ENCODE measurements at regions of chr9 and their contacts with region 1.

Region 1: DNA sequence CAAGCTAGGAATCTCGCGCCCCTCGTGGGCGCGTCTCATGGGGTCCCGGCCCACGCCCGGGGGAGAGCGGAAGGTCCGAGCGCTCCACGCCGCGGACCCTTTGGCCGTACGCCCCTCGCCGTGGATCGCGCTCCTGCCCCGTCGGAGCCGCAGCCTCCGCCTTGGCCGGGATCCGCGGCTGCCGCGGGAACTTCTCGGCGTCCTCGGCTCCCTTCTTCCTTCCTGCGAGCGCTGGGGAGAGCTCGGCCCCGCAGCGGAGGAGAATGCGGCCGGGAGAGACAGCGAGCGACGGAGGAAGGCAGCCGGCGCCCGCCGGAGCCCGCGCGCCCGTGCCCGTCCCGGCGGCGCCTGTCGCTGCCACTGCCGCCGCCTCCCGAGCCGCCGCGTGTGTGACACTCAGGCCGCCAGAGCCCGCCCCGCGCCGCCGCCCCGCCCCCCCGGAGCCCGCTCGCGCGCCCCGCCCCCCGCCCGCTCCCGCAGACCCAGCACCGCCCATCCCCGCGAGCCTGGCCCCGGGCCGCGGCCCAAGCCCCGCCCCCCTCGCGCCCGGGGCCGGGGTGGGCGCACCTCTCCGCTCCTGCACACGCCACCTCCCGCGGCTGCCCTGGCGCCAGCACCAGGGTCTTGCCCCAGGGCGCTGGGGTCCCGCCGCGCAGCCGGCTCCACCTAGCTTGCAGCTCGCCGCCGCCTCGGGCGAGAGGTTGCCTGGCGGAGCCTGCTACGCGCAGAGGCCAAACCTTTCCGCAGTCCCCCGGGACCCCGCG is at the start of gene SHB:
- DNase-seq: peak; percentile 71
- ATAC-seq: peak; percentile 84
- H3K4me3 Mint-ChIP-seq: peak within 1 kb of the TSS; percentile 82
- H3K27ac Mint-ChIP-seq: no peak within 1 kb of the TSS
- H3K4me1 Mint-ChIP-seq: peaks cover 14% of the 10 kb centered on the region
- H3K27me3 Mint-ChIP-seq: peaks cover 25% of the 10 kb centered on the region
- CTCF ChIP-seq: no peak
- total RNA-seq, gene SHB: 0.44 and 0.81 TPM in 2 replicates

Region 2: GRCh38 chr9:37582548-37583157 is 486.4 kb before region 1 on chr9:
- CTCF ChIA-PET with region 1: no interaction called
- POLR2A ChIA-PET with region 1: no interaction called
- intact Hi-C with region 1: loop called (anchors 5 kb)
- DNase-seq: no peak
- ATAC-seq: peak; percentile 69
- H3K4me3 Mint-ChIP-seq: no peak overlapping the region
- H3K27ac Mint-ChIP-seq: peak overlapping the region; percentile 47
- H3K4me1 Mint-ChIP-seq: peaks cover 21% of the 10 kb centered on the region
- H3K27me3 Mint-ChIP-seq: no peaks in the 10 kb centered on the region
- CTCF ChIP-seq: no peak

Region 3: DNA sequence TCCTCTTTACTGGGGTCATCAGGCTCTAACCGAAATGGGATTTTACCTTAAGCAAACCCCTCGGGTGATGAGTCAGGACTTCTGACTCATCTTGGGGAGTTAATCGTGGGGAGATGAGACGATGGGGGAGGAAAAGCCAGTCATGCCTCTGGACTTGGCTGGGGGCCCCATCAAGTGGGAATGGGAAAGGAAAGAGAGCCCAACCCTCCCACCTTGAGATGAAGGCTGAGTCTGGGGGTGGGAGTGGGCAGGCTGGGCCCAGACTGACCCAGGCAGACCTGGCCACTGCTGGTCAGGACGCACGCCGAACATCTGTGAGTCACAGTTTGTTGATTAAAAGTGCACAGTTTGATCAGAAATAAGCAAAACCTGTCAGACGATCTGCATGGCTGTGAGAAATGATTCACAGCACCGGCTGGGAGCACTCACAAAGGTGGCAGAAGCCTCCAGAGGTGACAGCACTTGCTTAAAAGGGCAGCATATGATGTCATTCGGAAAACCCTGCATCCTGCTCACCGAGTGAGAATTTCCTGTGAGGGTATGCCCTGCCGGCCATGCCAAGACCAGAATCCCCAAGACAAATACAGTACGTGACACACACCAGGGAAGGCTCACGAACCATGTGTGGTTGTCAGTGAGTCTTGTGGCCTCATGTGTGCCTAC is 115.1 kb before region 1 on chr9:
- CTCF ChIA-PET with region 1: no interaction called
- POLR2A ChIA-PET with region 1: no interaction called
- intact Hi-C with region 1: loop called (anchors 1 kb)
- DNase-seq: no peak
- ATAC-seq: peak; percentile 76
- H3K4me3 Mint-ChIP-seq: peak overlapping the region; percentile 22
- H3K27ac Mint-ChIP-seq: peak overlapping the region; percentile 72
- H3K4me1 Mint-ChIP-seq: peaks cover 21% of the 10 kb centered on the region
- H3K27me3 Mint-ChIP-seq: no peaks in the 10 kb centered on the region
- CTCF ChIP-seq: no peak

Region 4: GRCh38 chr9:38047301-38048251 is 21.5 kb before region 1 on chr9:
- CTCF ChIA-PET with region 1: no interaction called
- POLR2A ChIA-PET with region 1: no interaction called
- intact Hi-C with region 1: no loop called
- DNase-seq: no peak
- ATAC-seq: no peak
- H3K4me3 Mint-ChIP-seq: no peak overlapping the region
- H3K27ac Mint-ChIP-seq: no peak overlapping the region
- H3K4me1 Mint-ChIP-seq: no peaks in the 10 kb centered on the region
- H3K27me3 Mint-ChIP-seq: peaks cover 19% of the 10 kb centered on the region
- CTCF ChIP-seq: no peak

Region 5: DNA sequence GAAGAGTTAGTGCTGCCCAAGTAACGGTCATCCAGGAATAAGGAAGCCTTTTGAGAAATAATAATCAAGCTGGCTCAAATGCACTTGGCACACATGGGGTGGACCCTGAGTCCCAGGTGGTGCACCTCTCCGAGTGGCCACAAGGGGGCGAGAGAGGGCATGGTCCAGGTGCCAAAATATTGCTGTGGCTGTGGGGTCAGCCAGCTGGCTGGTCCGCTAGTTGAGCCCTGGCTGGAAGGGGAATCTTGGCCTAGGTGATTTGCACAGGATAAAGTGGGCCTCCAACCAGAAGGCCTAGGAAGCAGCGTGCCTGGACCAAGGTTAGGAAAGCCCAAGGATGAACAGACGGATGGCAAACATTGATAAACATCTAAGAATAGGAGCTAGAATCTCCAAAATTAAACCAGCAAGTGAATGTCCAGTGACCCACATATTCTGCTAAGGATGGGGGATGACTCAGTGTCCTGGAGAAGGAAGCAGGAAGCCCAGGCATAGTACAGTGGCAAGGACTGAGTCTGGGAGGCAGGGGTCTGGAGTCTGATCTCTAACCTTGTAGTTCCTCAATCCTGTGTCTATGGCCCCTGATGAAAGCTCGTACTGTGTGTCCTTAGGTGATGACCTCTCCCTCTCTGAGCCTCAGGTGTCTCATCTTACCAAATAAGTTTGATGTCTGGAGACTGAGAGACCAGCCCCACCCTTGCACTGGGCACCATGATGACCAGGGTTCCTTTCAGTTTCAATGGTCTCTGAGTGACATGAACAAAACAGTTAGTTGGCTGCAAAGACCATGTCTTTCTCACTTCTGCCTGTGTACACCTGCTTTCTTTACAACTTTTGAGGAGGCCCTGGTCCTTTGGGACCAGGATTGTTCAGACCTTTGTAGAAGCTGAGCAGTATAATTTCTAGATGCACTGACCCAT is 19.2 kb after region 1 on chr9:
- CTCF ChIA-PET with region 1: interaction called, 3 read pairs
- POLR2A ChIA-PET with region 1: no interaction called
- intact Hi-C with region 1: loop called (anchors 2 kb)
- DNase-seq: peak; percentile 64
- ATAC-seq: peak; percentile 73
- H3K4me3 Mint-ChIP-seq: no peak overlapping the region
- H3K27ac Mint-ChIP-seq: no peak overlapping the region
- H3K4me1 Mint-ChIP-seq: no peaks in the 10 kb centered on the region
- H3K27me3 Mint-ChIP-seq: peaks cover 15% of the 10 kb centered on the region
- CTCF ChIP-seq: peak; percentile 74

Region 6: GRCh38 chr9:38392235-38393127 is 323.4 kb after region 1 on chr9 and contains the start of gene ALDH1B1:
- CTCF ChIA-PET with region 1: interaction called, 3 read pairs
- POLR2A ChIA-PET with region 1: interaction called, 3 read pairs
- intact Hi-C with region 1: loop called (anchors 10 kb)
- DNase-seq: peak; percentile 74
- ATAC-seq: peak; percentile 99
- H3K4me3 Mint-ChIP-seq: peak within 1 kb of the TSS; percentile 94
- H3K27ac Mint-ChIP-seq: peak within 1 kb of the TSS; percentile 79
- H3K4me1 Mint-ChIP-seq: peaks cover 16% of the 10 kb centered on the region
- H3K27me3 Mint-ChIP-seq: peaks cover 6% of the 10 kb centered on the region
- CTCF ChIP-seq: no peak
- total RNA-seq, gene ALDH1B1: 9.0 and 9.8 TPM in 2 replicates